PC-3 (cell line): ENCODE measurements at regions of chr2 and their contacts with region 1.

Region 1: DNA sequence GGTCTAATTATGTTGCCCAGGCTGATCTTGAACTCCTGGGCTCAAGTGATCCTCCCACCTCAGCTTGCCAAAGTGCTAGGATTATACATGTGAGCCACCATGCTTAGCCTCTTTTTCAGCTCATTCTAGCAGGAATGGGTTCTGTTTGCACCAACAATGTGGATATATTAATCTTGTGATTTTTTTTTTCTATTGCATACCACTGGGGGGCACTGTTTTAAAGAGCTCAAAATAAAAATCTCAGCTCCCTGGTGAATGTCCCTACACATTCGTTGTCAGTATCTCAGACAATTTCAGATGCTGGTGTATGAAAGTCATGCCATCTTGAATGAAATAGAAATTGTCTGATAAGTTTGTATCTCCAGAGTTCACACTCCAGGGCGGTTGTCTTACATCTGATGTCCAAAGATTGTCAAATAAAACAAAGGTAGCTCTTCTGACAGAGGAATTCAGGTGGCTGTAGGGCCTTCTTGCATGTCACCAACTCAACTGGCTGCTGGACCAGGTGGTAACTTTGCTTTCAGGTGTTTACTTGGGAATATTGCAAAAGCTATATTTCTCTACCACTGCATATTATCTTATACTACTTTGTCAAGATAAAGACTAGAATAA is 3.1 kb upstream of the MATN3 start:
- DNase-seq: peak; percentile 60
- ATAC-seq: no peak
- H3K4me3 ChIP-seq: no peak overlapping the region
- H3K27ac ChIP-seq: no peak overlapping the region
- H3K4me1 ChIP-seq: peaks cover 10% of the 10 kb centered on the region
- H3K27me3 ChIP-seq: no peaks in the 10 kb centered on the region
- CTCF ChIP-seq: peak; percentile 74

Region 2: DNA sequence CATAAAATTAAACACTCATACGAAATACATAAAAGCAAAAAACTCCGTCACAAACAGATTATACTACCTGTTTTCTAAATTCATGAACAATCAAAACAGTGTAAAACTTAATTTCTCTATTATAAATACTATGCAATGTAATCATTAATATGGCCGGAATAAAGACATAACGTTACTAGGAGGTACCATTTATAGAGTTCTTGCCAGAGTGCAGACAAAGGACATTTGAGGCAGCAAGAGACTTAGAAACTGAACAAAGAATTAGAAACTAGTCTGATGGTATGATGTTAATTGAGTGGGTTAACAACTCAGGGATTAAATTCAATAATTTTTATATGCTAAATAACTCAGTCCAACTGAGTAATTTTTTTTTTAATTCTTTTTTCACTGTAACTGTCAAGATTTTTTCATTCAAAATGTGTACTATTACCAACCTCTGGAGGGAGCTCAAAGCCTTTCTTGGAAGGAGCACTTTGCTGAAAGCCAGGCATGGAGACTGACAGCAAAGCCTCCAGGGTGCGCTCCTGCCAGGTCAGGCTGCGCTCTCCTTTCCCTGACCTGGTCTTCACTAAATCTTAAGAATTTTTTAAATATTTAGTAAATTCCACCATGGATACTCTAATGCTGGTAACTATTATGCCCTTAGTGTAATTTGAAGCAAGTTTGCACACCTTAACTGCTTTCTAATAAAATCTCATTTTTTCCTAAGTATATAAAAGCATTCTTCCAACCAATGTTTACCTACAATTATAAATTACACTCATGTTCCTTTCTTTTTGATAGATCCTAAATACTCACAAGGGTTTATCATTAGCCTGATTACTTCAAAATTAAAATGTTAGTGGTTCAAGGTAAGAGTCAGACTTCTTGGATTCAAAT is 59.8 kb before region 1 on chr2:
- CTCF ChIA-PET with region 1: interaction called, 4 read pairs
- POLR2A ChIA-PET with region 1: no interaction called
- intact Hi-C with region 1: loop called (anchors 2 kb)
- DNase-seq: peak; percentile 80
- ATAC-seq: peak; percentile 98
- H3K4me3 ChIP-seq: no peak overlapping the region
- H3K27ac ChIP-seq: no peak overlapping the region
- H3K4me1 ChIP-seq: no peaks in the 10 kb centered on the region
- H3K27me3 ChIP-seq: no peaks in the 10 kb centered on the region
- CTCF ChIP-seq: peak; percentile 95